ENCODE measurements at regions of chr6 and their contacts with region 1.

Region 1: DNA sequence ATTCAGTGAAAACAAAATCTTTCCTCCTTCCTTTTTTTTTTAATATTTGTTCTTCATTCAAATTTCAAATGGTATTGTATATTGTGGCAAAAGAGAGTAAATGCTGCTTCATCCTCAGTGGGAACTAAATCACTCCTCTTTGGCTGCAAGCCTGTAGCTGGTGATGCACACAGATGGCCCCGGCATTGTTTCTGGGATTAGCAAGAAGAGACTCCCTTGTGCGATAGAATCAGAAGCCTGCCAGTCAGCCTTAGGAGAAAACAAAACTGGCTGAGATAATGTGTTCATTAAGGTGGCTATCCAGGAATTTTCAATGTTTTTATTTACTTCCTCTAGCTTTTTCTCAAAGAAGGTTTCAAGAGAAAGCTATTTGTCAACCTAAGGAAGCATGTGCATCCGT is 20.7 kb upstream of the ELOVL2 start:
- DNase-seq: no peak
- H3K4me3 ChIP-seq: no peak overlapping the region
- H3K27ac ChIP-seq: no peak overlapping the region
- H3K4me1 ChIP-seq: no peaks in the 10 kb centered on the region
- H3K27me3 ChIP-seq: no peaks in the 10 kb centered on the region
- CTCF ChIP-seq: no peak

Region 2: GRCh38 chr6:10954590-10955010 is 110.2 kb before region 1 on chr6:
- intact Hi-C with region 1: loop called (anchors 10 kb)
- DNase-seq: peak; percentile 81 to 90 (median 88)
- H3K4me3 ChIP-seq: no peak overlapping the region
- H3K27ac ChIP-seq: no peak overlapping the region
- H3K4me1 ChIP-seq: no peaks in the 10 kb centered on the region
- H3K27me3 ChIP-seq: no peaks in the 10 kb centered on the region
- CTCF ChIP-seq: peak; percentile 66

Region 3: DNA sequence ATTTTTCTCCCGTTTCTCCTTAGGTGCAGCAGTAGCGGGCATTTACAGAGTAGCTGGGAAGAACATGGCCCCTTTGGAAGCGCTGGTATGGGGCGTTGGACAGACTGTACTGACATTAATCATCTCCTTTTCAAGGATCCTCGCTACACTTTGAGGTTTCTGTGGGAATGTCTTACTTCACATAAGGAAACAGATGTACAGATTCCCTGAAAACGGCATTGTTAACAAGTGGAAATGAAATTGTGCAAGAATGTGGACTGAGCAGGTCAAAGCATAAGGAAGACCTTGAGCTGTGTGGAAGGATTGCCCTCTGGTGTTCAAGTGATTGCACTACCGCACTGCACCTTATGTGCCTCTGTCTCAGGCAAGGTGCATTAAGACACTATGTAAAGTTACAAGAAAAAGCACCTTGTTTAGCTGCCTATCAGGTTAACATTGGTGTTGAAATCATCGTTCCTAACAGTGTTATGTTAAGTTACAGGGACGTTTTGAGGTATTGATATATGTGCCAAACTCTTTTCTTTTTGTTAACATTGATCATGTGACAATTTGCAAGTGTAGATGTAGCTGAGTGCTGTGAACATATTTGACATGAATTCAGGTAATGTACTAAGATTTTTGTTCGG is 510.7 kb after region 1 on chr6:
- intact Hi-C with region 1: no loop called
- DNase-seq: peak in 4 of 5 donors; percentile 64 to 84 (median 74)
- H3K4me3 ChIP-seq: peak overlapping the region in 2 of 3 donors; percentile 37 to 45
- H3K27ac ChIP-seq: no peak overlapping the region
- H3K4me1 ChIP-seq: no peaks in the 10 kb centered on the region
- H3K27me3 ChIP-seq: no peaks in the 10 kb centered on the region
- CTCF ChIP-seq: peak; percentile 97

Measured in kidney (tissue), 22 donors.